Kidney (tissue), 22 donors: ENCODE measurements at regions of chr22 and their contacts with region 1.

Region 1: DNA sequence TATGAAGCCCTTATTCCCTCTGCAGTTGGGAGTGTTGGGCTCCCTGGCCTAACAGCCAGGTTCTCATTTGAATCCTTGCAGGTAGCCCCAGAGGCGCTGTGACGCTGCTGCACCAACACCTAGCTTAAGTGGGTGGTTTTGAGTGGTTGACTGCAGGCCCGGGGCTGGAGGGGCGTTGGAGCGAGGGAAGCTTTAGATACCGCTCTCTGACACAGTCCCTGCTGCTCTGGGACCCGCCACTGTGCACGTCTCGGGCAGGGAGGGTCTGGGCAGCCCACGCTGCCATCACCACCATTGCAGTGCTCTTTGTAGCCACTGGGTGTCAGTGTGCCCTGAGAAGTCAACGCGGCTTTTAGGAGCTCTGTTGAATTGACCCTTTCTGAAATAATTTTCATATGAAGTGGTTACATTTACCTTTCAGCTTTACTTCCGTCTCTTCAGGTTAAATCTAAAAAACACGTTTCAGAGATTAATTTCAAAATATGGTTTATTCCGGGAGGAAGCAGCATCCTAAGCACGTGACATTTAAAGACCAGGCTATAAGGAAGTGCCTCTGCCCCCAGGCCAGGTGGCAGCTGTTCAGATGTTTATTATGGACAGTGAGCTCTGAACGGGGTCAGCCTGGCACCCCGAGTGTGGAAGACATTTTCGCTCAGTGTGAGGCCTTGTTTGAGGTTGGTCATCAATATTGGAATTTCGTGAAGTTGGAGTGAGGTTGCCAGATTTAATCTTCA is 30.9 kb upstream of the PARVB start:
- DNase-seq: peak in 4 of 5 donors; percentile 66 to 73 (median 68)
- H3K4me3 ChIP-seq: no peak overlapping the region
- H3K27ac ChIP-seq: no peak overlapping the region
- H3K4me1 ChIP-seq: no peaks in the 10 kb centered on the region
- H3K27me3 ChIP-seq: no peaks in the 10 kb centered on the region
- CTCF ChIP-seq: peak; percentile 94

Region 2: GRCh38 chr22:43796567-43796966 is 196.6 kb before region 1 on chr22:
- intact Hi-C with region 1: no loop called
- DNase-seq: peak in 3 of 5 donors; percentile 44 to 79 (median 51)
- H3K4me3 ChIP-seq: no peak overlapping the region
- H3K27ac ChIP-seq: no peak overlapping the region
- H3K4me1 ChIP-seq: no peaks in the 10 kb centered on the region
- H3K27me3 ChIP-seq: no peaks in the 10 kb centered on the region
- CTCF ChIP-seq: peak; percentile 12

Region 3: GRCh38 chr22:44080936-44081861 is 88.0 kb after region 1 on chr22:
- intact Hi-C with region 1: loop called (anchors 10 kb)
- DNase-seq: peak in 4 of 5 donors; percentile 83 to 88 (median 86)
- H3K4me3 ChIP-seq: no peak overlapping the region
- H3K27ac ChIP-seq: no peak overlapping the region
- H3K4me1 ChIP-seq: no peaks in the 10 kb centered on the region
- H3K27me3 ChIP-seq: no peaks in the 10 kb centered on the region
- CTCF ChIP-seq: peak; percentile 66

Region 4: GRCh38 chr22:44625981-44626687 is 632.9 kb after region 1 on chr22:
- intact Hi-C with region 1: loop called (anchors 5 kb)
- DNase-seq: peak in 4 of 5 donors; percentile 80 to 85 (median 82)
- H3K4me3 ChIP-seq: no peak overlapping the region
- H3K27ac ChIP-seq: no peak overlapping the region
- H3K4me1 ChIP-seq: no peaks in the 10 kb centered on the region
- H3K27me3 ChIP-seq: no peaks in the 10 kb centered on the region
- CTCF ChIP-seq: peak; percentile 99